ENCODE measurements at regions of chr14 and their contacts with region 1.

Region 1: DNA sequence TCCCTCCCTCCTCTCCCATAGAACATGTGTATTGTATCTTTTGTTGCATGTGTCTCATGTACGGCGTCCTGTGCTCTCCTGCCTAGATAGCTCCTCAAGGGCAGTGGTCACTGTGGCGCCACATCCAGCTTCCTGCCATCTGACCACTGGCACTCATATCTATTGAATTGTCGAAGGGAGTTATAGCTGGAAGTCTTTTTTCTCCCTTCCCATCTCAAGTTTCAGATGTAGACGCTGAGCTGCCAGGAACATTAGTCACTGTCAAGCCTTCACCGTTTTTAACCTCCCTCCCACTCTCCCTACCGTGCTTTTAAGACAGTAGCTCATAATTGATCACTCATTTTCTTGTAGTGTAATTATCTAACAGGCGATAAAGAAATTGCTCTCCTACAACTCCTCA is 33.0 kb downstream of the MTHFD1 start:
- DNase-seq: peak; percentile 68 to 72
- H3K4me3 ChIP-seq: no peak overlapping the region
- H3K27ac ChIP-seq: peak overlapping the region; percentile 47
- H3K4me1 ChIP-seq: peaks cover 11% of the 10 kb centered on the region
- H3K27me3 ChIP-seq: no peaks in the 10 kb centered on the region
- CTCF ChIP-seq: no peak

Region 2: GRCh38 chr14:63981569-63981968 is 439.6 kb before region 1 on chr14:
- CTCF ChIA-PET with region 1: no interaction called
- POLR2A ChIA-PET with region 1: interaction called, 11 read pairs
- intact Hi-C with region 1: no loop called
- DNase-seq: no peak
- H3K4me3 ChIP-seq: no peak overlapping the region
- H3K27ac ChIP-seq: no peak overlapping the region
- H3K4me1 ChIP-seq: no peaks in the 10 kb centered on the region
- H3K27me3 ChIP-seq: no peaks in the 10 kb centered on the region
- CTCF ChIP-seq: no peak

Region 3: GRCh38 chr14:64220466-64220865 is 200.7 kb before region 1 on chr14:
- CTCF ChIA-PET with region 1: no interaction called
- POLR2A ChIA-PET with region 1: no interaction called
- intact Hi-C with region 1: no loop called
- DNase-seq: no peak
- H3K4me3 ChIP-seq: no peak overlapping the region
- H3K27ac ChIP-seq: no peak overlapping the region
- H3K4me1 ChIP-seq: no peaks in the 10 kb centered on the region
- H3K27me3 ChIP-seq: no peaks in the 10 kb centered on the region
- CTCF ChIP-seq: no peak

Region 4: DNA sequence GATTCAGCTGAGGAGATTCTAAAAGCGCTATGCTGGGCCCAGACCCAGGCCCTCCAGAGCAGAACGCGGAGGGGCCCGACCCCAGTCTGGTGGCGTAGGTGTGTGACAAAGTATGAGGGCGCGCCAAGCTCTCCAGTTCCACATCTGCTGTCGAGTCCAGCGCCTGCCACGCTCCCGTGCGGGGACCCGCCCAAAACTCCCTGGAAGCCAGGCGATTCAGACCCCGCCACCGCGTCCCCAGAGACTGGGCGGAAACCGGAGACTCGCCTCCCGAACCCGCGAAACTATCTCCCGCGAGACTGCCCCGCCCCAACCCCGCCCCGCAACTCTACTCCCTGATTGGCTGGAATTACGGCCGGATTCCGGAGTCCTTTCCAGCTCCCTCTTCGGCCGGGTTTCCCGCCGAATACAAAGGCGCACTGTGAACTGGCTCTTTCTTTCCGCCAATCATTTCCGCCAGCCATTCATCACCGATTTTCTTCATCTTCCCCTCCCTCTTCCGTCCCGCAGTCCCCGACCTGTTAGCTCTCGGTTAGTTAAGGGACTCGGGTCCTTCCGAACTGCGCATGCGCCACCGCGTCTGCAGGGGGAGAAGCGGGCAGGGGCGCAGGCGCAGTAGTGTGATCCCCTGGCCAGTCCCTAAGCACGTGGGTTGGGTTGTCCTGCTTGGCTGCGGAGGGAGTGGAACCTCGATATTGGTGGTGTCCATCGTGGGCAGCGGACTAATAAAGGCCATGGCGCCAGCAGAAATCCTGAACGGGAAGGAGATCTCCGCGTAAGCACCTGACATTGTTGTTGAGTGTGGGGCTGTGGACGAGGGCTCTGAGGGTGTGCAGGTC is 33.3 kb before region 1 on chr14 and contains the start of gene MTHFD1:
- CTCF ChIA-PET with region 1: no interaction called
- POLR2A ChIA-PET with region 1: interaction called, 12 read pairs
- intact Hi-C with region 1: no loop called
- DNase-seq: peak; percentile 98 to 99
- H3K4me3 ChIP-seq: peak within 1 kb of the TSS; percentile 73
- H3K27ac ChIP-seq: peak within 1 kb of the TSS; percentile 72
- H3K4me1 ChIP-seq: peaks cover 23% of the 10 kb centered on the region
- H3K27me3 ChIP-seq: no peaks in the 10 kb centered on the region
- CTCF ChIP-seq: no peak
- total RNA-seq, gene MTHFD1: 130 and 161 TPM in 2 replicates

Region 5: DNA sequence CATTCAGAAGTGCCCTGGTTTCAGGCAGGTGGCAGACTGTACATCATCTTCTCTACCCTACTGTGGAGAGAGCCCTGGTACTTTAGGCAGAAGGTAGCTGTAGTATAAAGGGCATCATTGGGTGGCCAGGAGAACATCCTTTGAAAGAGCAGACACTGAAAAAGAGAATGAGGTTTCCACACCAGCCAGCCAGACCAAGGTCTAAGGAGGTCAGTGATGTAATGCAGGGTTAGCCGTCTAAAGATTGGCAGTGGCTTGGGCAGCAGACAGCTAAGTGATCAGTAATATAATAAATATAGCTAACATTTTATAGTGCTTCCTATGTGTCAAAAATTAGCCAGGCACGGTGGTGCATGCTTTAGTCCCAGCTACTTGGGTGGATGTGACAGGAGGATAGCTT is 70.5 kb after region 1 on chr14:
- CTCF ChIA-PET with region 1: no interaction called
- POLR2A ChIA-PET with region 1: interaction called, 25 read pairs
- intact Hi-C with region 1: no loop called
- DNase-seq: no peak
- H3K4me3 ChIP-seq: no peak overlapping the region
- H3K27ac ChIP-seq: no peak overlapping the region
- H3K4me1 ChIP-seq: no peaks in the 10 kb centered on the region
- H3K27me3 ChIP-seq: no peaks in the 10 kb centered on the region
- CTCF ChIP-seq: no peak

Region 6: GRCh38 chr14:64654246-64654900 is 233.2 kb after region 1 on chr14:
- CTCF ChIA-PET with region 1: no interaction called
- POLR2A ChIA-PET with region 1: interaction called, 13 read pairs
- intact Hi-C with region 1: no loop called
- DNase-seq: peak in 1 of 2 experiments; percentile 87
- H3K4me3 ChIP-seq: no peak overlapping the region
- H3K27ac ChIP-seq: peak overlapping the region; percentile 41
- H3K4me1 ChIP-seq: peaks cover 19% of the 10 kb centered on the region
- H3K27me3 ChIP-seq: no peaks in the 10 kb centered on the region
- CTCF ChIP-seq: no peak